ENCODE measurements at regions of chr17 and their contacts with region 1.

Region 1: GRCh38 chr17:43483674-43484372 is at the start of gene DHX8:
- DNase-seq: peak; percentile 96 to 99
- H3K4me3 ChIP-seq: peak within 1 kb of the TSS; percentile 54
- CTCF ChIP-seq: peak; percentile 55 to 100 (median 99)
- POLR2A ChIP-seq: no peak
- total RNA-seq, gene DHX8: 35.7 to 60.3 (median 44.0) TPM

Region 2: GRCh38 chr17:43338886-43339516 is 144.8 kb before region 1 on chr17:
- intact Hi-C with region 1: no loop called
- DNase-seq: peak in 1 of 2 donors; percentile 93
- H3K4me3 ChIP-seq: no peak overlapping the region
- CTCF ChIP-seq: no peak
- POLR2A ChIP-seq: no peak

Region 3: GRCh38 chr17:43393944-43394482 is 89.8 kb before region 1 on chr17:
- intact Hi-C with region 1: loop called (anchors 2 kb)
- DNase-seq: peak; percentile 92 to 98
- H3K4me3 ChIP-seq: no peak overlapping the region
- CTCF ChIP-seq: peak in 1 of 3 donors; percentile 94
- POLR2A ChIP-seq: no peak

Region 4: GRCh38 chr17:43461185-43461584 is 22.6 kb before region 1 on chr17:
- intact Hi-C with region 1: loop called (anchors 2 kb)
- DNase-seq: no peak
- H3K4me3 ChIP-seq: no peak overlapping the region
- CTCF ChIP-seq: no peak
- POLR2A ChIP-seq: no peak